CD8-positive, alpha-beta T cell (primary cell): ENCODE measurements at regions of chr4 and their contacts with region 1.

Region 1: DNA sequence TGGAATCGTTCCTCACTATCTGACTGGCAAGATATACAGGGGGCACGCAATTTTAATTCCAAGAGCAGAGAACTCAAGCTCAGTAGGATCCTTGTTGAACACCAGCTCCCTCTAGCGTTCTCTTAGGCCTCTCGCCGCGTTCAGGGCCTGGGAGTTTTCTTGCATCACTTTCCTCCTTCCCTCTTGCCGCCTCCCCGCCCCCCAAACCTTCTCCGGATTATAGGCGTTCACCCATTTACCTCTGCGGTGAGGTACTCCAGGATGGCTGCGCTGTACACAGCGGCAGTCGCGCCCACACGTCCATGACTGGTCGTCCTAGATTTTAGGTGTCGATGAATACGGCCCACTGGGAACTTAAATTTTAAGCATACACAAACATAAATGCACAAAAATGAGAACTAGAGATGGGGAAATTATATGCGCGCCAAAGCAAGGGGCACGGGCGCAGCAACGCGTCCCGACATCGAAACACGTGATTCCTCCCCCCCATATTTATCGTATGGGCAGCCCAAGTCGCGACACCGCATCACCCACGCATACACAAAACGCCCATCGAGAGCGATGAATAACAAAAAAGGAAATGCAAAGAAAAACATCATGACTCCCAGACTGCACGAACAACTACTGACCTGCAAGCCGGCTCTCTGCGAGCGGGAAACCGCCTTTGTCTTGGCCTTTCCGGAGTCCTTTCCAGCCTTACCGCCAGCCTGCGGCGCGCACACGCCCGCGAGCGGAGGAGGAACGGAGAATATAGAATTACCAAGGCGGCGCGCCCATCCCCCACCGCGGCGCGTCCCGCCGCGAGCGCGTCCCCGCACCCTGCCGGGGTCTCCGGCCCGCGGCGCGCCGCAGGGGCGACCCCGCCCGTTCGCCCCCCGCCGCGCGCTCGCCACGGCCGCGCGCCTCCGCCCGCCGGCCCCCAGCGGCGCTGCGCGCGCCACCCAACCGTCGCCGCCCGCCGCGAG is 759 bp downstream of the H2AZ1 start:
- DNase-seq: peak; percentile 67 to 95 (median 88)
- ATAC-seq: peak; percentile 32
- H3K4me3 ChIP-seq: peak overlapping the region; percentile 89 to 97
- H3K4me3 Mint-ChIP-seq: no peak overlapping the region
- H3K27ac ChIP-seq: peak overlapping the region; percentile 85 to 97
- H3K27ac Mint-ChIP-seq: no peak overlapping the region
- H3K4me1 ChIP-seq: peaks cover 37% of the 10 kb centered on the region
- H3K4me1 Mint-ChIP-seq: peaks cover 35% of the 10 kb centered on the region
- H3K27me3 ChIP-seq: no peaks in the 10 kb centered on the region
- H3K27me3 Mint-ChIP-seq: no peaks in the 10 kb centered on the region
- CTCF ChIP-seq: peak; percentile 58

Region 2: DNA sequence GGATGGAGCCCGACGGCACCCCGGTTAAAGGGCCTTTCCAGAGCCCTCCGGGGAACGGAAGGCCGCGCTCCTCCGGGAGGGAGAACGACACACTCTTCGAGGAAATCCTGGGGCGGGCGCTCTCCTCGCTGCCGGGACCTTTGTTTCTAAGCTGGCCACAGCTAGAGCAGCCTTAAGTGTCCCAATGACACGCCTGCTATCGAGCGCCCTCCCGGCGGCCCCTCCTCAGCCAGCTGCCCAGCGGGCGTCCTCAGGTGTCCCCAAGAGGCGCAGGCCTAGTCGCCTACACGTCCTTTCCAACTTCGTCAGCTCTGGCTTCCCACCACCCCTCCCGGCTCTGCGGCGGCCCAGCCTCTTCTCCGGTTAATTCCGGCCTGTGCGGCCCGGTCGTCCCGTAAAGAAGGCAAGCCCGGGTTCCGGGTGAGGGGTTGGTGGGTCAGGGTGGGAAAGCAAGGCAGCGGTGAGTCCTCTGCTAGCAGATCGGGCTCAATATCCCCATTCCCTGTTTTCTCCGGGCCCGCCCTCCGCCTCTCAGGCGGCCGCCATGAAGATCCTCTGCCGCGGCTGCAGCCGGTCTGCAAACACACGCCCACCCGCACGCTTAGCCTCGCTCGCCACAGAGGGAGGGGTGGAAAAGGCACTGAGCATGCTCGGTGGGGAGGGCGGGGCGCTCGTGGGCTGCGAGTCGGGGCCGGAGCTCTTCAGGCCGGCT is 1688.6 kb before region 1 on chr4:
- CTCF ChIA-PET with region 1: no interaction called
- POLR2A ChIA-PET with region 1: interaction called, 5 read pairs
- intact Hi-C with region 1: loop called (anchors 2 to 5 kb)
- DNase-seq: peak; percentile 67 to 95 (median 88)
- ATAC-seq: peak; percentile 72
- H3K4me3 ChIP-seq: peak overlapping the region; percentile 89 to 96
- H3K4me3 Mint-ChIP-seq: peak overlapping the region; percentile 94
- H3K27ac ChIP-seq: peak overlapping the region; percentile 77 to 79
- H3K27ac Mint-ChIP-seq: peak overlapping the region; percentile 95
- H3K4me1 ChIP-seq: peaks cover 27% of the 10 kb centered on the region
- H3K4me1 Mint-ChIP-seq: peaks cover 51% of the 10 kb centered on the region
- H3K27me3 ChIP-seq: no peaks in the 10 kb centered on the region
- H3K27me3 Mint-ChIP-seq: no peaks in the 10 kb centered on the region
- CTCF ChIP-seq: no peak

Region 3: GRCh38 chr4:99808260-99808857 is 141.0 kb before region 1 on chr4:
- CTCF ChIA-PET with region 1: interaction called, 50 read pairs
- POLR2A ChIA-PET with region 1: interaction called, 9 read pairs
- intact Hi-C with region 1: loop called (anchors 1 to 2 kb)
- DNase-seq: peak; percentile 46 to 80 (median 69)
- ATAC-seq: peak; percentile 97
- H3K4me3 ChIP-seq: no peak overlapping the region
- H3K4me3 Mint-ChIP-seq: no peak overlapping the region
- H3K27ac ChIP-seq: no peak overlapping the region
- H3K27ac Mint-ChIP-seq: no peak overlapping the region
- H3K4me1 ChIP-seq: no peaks in the 10 kb centered on the region
- H3K4me1 Mint-ChIP-seq: peaks cover 4% of the 10 kb centered on the region
- H3K27me3 ChIP-seq: no peaks in the 10 kb centered on the region
- H3K27me3 Mint-ChIP-seq: peaks cover 14% of the 10 kb centered on the region
- CTCF ChIP-seq: peak; percentile 93

Region 4: DNA sequence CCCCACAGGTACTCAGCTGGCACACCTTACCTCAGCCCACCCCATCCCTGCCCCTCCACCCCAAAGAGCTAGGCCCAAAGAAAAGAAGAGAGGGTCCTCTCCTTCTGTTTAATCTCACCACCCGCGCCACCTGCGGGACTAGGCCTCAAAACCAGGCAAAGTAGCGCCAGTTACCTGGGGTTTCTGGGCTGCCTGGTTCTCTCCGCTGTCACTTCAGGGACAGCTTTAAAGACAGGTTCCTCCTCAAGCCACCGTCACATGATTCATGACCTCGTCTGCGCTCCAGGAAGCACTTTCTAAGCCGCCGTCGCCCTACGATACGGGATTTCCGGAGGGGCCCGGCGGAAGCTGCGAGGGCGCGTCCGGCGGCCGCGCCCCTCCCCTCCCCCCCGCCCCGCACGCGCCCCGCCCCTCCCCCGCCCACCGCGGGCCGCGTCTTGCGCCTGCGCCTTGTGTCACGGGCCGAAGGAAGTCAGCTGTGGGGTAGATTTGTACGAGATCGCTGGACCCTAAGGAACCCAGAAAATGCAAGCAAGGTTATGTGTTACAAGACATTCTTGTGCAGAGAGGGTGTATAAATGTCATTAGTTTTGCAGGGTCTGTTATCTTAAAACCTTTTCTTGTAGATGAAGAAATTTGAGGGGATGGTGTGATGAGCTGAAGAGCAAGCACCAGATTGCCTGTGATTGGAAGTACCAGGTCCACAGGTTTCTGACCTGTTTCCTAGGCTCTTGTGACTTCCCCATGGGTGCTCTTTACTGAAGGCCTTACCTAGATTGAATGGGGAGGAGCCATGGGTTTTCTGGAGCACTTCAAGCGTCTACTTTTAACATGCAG is 54.9 kb before region 1 on chr4 and contains the start of gene LAMTOR3:
- CTCF ChIA-PET with region 1: interaction called, 9 read pairs
- POLR2A ChIA-PET with region 1: interaction called, 23 read pairs
- intact Hi-C with region 1: loop called (anchors 1 kb)
- DNase-seq: peak; percentile 80 to 97 (median 88)
- ATAC-seq: peak; percentile 94
- H3K4me3 ChIP-seq: peak within 1 kb of the TSS; percentile 68 to 80
- H3K4me3 Mint-ChIP-seq: peak within 1 kb of the TSS; percentile 97
- H3K27ac ChIP-seq: peak within 1 kb of the TSS; percentile 77 to 87
- H3K27ac Mint-ChIP-seq: peak within 1 kb of the TSS; percentile 98
- H3K4me1 ChIP-seq: peaks cover 30% of the 10 kb centered on the region
- H3K4me1 Mint-ChIP-seq: peaks cover 49% of the 10 kb centered on the region
- H3K27me3 ChIP-seq: no peaks in the 10 kb centered on the region
- H3K27me3 Mint-ChIP-seq: no peaks in the 10 kb centered on the region
- CTCF ChIP-seq: no peak
- total RNA-seq, gene LAMTOR3: 29.3 to 32.4 TPM

Region 5: GRCh38 chr4:100124715-100125114 is 175.4 kb after region 1 on chr4:
- CTCF ChIA-PET with region 1: no interaction called
- POLR2A ChIA-PET with region 1: no interaction called
- intact Hi-C with region 1: no loop called
- DNase-seq: no peak
- ATAC-seq: no peak
- H3K4me3 ChIP-seq: no peak overlapping the region
- H3K4me3 Mint-ChIP-seq: no peak overlapping the region
- H3K27ac ChIP-seq: no peak overlapping the region
- H3K27ac Mint-ChIP-seq: no peak overlapping the region
- H3K4me1 ChIP-seq: no peaks in the 10 kb centered on the region
- H3K4me1 Mint-ChIP-seq: no peaks in the 10 kb centered on the region
- H3K27me3 ChIP-seq: no peaks in the 10 kb centered on the region
- H3K27me3 Mint-ChIP-seq: no peaks in the 10 kb centered on the region
- CTCF ChIP-seq: no peak

Region 6: DNA sequence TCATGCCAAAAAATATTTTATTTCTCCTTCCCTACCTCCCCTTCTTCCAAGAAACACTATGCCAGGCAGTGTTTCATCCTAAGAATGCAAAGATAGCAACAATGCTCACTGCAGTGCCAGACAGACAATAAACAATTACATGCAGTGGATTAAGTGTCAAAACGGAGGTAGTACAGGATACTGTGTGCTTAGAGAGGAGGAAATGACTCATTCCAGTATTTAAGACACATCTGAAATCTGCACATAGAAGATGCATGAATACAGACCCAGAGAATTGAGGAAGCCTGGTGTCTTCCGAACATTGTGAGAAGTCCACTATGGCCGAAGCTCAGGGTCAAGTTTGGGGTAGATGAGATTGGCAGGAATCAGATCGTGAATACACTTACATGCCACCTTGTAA is 1071.6 kb after region 1 on chr4:
- CTCF ChIA-PET with region 1: no interaction called
- POLR2A ChIA-PET with region 1: no interaction called
- intact Hi-C with region 1: loop called in 1 of 2 experiments (anchors 10 kb)
- DNase-seq: peak in 2 of 9 experiments; percentile 59 to 73
- ATAC-seq: peak; percentile 72
- H3K4me3 ChIP-seq: no peak overlapping the region
- H3K4me3 Mint-ChIP-seq: peak overlapping the region; percentile 47
- H3K27ac ChIP-seq: peak overlapping the region; percentile 15 to 56
- H3K27ac Mint-ChIP-seq: peak overlapping the region; percentile 90
- H3K4me1 ChIP-seq: peaks cover 29% of the 10 kb centered on the region
- H3K4me1 Mint-ChIP-seq: peaks cover 35% of the 10 kb centered on the region
- H3K27me3 ChIP-seq: no peaks in the 10 kb centered on the region
- H3K27me3 Mint-ChIP-seq: no peaks in the 10 kb centered on the region
- CTCF ChIP-seq: no peak